Adrenal gland (tissue), 19 donors: ENCODE measurements at regions of chr1 and their contacts with region 1.

Region 1: DNA sequence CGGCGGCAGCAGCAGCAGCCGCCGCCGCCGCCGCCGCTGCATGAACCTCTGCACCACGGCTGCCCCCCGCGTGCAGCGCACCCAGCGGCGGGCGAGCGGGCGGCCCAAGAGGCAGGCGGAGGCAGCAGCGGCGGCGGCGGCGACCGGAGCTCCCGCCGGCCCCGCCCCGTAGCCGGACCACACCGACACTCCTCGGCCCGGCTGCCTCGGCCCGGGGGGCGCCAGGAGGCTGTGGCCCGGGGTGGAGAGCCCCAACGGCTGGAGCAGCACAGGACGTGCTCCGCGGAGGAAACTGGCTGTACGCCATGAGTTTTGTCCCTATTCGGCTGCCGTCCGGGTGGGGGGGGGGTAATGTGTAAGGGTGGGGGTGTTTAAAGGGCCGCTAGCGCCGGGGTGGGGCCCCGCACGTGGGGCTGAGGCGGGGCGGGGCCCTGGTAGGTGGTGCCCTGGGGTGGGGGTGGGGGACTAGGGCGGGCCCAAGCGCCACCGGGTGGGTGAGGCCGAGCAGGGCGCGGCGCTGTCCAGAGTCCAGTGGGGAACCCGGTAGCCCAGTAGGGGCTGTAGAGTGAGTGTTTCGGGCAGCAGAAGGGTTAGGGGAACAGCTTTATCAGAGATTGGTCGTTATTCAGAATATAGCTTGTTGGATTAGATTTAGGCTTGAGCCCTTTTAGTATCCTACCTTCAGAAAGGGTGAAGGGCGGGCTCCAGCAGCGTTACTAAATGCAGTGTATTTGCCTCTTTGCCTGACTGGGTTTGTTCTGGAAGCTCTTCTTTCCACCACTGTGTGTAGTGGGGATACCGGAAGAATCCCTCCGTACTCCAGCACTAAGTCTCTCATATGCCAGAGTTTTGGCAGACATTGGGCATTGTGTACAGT is at the start of gene FAM78B:
- DNase-seq: peak; percentile 67 to 83 (median 73)
- H3K4me3 ChIP-seq: peak within 1 kb of the TSS in 3 of 4 donors; percentile 35 to 77 (median 76)
- H3K27ac ChIP-seq: peak within 1 kb of the TSS in 1 of 5 donors; percentile 20
- H3K4me1 ChIP-seq: peaks cover 13 to 20% of the 10 kb centered on the region in 2 donors
- H3K27me3 ChIP-seq: no peaks in the 10 kb centered on the region
- CTCF ChIP-seq: peak in 1 of 6 experiments; percentile 26
- POLR2A ChIP-seq: no peak
- total RNA-seq, gene FAM78B: 0.28 to 3.5 (median 1.1) TPM

Region 2: DNA sequence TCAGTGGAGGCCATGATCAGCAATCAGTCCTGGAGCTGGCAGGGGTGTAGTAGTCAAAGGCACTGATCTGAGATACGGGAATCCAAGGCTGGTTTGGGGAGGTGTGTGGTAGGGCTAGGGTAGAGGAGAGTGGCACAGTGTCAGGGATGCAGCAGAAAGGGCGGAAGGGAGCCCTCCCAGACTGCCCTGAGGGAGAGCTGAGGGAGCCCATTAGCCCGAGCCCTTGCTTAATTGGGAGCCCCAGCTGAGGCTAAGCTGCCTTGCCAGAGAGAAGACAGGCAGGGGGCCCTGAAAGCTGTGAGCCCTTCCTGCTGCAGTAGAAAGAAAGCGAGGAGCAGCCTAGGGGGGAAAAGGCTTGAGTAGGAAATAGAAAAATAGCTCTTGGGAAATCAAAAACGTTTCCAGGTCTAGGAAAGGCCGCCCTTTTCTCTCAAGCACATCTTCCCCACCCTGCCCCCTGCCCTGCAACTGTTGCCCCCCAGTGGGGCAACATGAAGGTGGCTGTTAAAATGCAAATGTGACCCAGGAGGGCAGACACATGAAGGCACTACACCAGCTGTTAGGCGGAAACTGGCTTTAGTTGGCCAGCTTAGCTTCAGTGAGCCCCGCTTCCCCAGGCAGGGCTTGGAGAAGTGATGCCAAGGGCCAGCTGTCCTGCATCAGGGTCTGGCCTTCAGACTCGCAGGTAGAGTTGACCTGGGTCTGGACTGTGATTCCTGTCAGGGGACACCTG is 233.3 kb before region 1 on chr1:
- intact Hi-C with region 1: loop called in 1 of 2 experiments (anchors 10 kb)
- DNase-seq: no peak
- H3K4me3 ChIP-seq: no peak overlapping the region
- H3K27ac ChIP-seq: no peak overlapping the region
- H3K4me1 ChIP-seq: no peaks in the 10 kb centered on the region
- H3K27me3 ChIP-seq: no peaks in the 10 kb centered on the region
- CTCF ChIP-seq: no peak
- POLR2A ChIP-seq: no peak